H1 (cell line): ENCODE measurements at regions of chr19 and their contacts with region 1.

Region 1: GRCh38 chr19:2261438-2262172 is 5.4 kb upstream of the JSRP1 start:
- DNase-seq: peak in 1 of 2 experiments; percentile 78
- H3K4me3 ChIP-seq: no peak overlapping the region
- H3K27ac ChIP-seq: no peak overlapping the region
- H3K4me1 ChIP-seq: 0 out of 7 replicates have a peak, but pooled peaks cover 0 to 3% (median 0%) of the 10 kb centered on the region in 4 experiments
- H3K27me3 ChIP-seq: no peaks in the 10 kb centered on the region; a peak in 1 of 7 replicates
- CTCF ChIP-seq: peak; percentile 56 to 73 (median 70)
- EP300 ChIP-seq: no peak
- POLR2A ChIP-seq: no peak
- RAD21 ChIP-seq: peak; percentile 40 to 48

Region 2: GRCh38 chr19:2246801-2247361 is 14.7 kb before region 1 on chr19:
- CTCF ChIA-PET with region 1: interaction called, 15 read pairs
- POLR2A ChIA-PET with region 1: interaction called, 330 read pairs
- DNase-seq: no peak
- H3K4me3 ChIP-seq: no peak overlapping the region
- H3K27ac ChIP-seq: no peak overlapping the region
- H3K4me1 ChIP-seq: no peaks in the 10 kb centered on the region; a peak in 1 of 7 replicates
- H3K27me3 ChIP-seq: peaks cover 0 to 3% (median under 1%) of the 10 kb centered on the region in 4 experiments; a peak in 1 of 7 replicates
- CTCF ChIP-seq: no peak
- EP300 ChIP-seq: no peak
- POLR2A ChIP-seq: no peak
- RAD21 ChIP-seq: no peak

Region 3: GRCh38 chr19:2337329-2338043 is 75.9 kb after region 1 on chr19:
- CTCF ChIA-PET with region 1: no interaction called
- POLR2A ChIA-PET with region 1: no interaction called
- DNase-seq: peak in 1 of 2 experiments; percentile 77
- H3K4me3 ChIP-seq: no peak overlapping the region
- H3K27ac ChIP-seq: no peak overlapping the region
- H3K4me1 ChIP-seq: peaks cover 0 to 8% (median 2%) of the 10 kb centered on the region in 4 experiments; a peak in 4 of 7 replicates
- H3K27me3 ChIP-seq: no peaks in the 10 kb centered on the region
- CTCF ChIP-seq: peak in 2 of 3 experiments; percentile 43 to 46; a peak in 3 of 4 replicates
- EP300 ChIP-seq: no peak
- POLR2A ChIP-seq: no peak
- RAD21 ChIP-seq: peak; percentile 8 to 23; a peak in 2 of 4 replicates